Activated B cell treated with CpG ODN at 0.5 μM for 24 hours (primary cell): ENCODE measurements at regions of chr5 and their contacts with region 1.

Region 1: DNA sequence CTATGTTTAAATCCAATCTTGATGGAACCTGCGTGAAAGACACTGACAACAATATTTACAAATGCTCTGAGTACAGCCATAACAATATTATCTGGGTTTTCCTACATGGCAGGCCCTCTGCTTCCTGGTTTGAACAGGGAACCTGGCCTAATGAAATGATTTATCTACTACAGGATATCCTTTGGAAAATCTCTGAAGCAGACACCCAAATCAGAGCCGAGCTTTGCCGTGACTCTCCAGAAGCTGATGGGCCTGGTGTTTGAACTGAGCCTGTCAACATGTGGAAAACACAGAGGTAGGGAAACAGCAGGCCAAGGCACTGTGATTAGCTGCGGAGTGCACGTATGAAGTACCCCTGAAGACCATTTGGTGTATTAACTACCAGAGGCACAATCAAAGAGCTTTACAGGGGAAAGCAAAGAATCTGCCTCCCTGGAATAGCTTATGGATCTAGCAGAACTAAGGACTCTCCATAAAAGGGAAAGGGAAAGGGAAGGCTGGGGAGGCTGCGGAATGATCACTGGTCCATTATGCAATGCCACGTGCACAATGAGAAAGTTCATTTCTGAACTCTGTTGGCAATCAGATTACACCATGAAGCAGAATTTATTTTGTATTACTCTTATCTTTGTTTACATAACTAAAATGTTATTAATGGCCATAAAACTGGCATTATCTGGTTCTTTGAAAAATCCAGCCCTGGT is 321.9 kb downstream of the EBF1 start:
- DNase-seq: no peak
- ATAC-seq: no peak
- H3K4me3 Mint-ChIP-seq: no peak overlapping the region
- H3K27ac Mint-ChIP-seq: peak overlapping the region; percentile 92
- H3K4me1 Mint-ChIP-seq: peaks cover 92% of the 10 kb centered on the region
- H3K27me3 Mint-ChIP-seq: no peaks in the 10 kb centered on the region
- CTCF ChIP-seq: no peak

Region 2: DNA sequence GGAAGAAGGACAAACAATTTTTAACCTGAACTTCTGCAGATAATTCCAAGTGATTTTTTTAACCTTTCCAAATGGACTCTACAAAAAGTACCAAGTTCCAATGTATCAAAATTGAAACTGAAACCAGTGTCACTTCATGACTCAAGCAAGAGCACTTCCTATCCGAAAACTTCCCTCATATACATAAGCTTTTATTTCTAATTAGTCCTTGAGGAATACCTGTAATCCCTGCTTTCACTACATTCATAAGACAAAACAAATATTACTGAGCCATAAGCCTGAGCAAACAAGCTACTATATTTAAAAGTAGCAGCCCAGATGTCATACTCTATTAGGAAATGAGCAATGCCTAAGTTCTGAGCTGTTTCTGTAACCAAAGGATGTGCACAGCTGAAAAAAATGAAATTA is 97.5 kb after region 1 on chr5:
- CTCF ChIA-PET with region 1: interaction called, 3 read pairs
- POLR2A ChIA-PET with region 1: interaction called, 13 read pairs
- intact Hi-C with region 1: no loop called
- DNase-seq: no peak
- ATAC-seq: peak; percentile 36
- H3K4me3 Mint-ChIP-seq: peak overlapping the region; percentile 72
- H3K27ac Mint-ChIP-seq: peak overlapping the region; percentile 93
- H3K4me1 Mint-ChIP-seq: peaks cover 93% of the 10 kb centered on the region
- H3K27me3 Mint-ChIP-seq: no peaks in the 10 kb centered on the region
- CTCF ChIP-seq: no peak